H1 (cell line): ENCODE measurements at regions of chr11 and their contacts with region 1.

Region 1: DNA sequence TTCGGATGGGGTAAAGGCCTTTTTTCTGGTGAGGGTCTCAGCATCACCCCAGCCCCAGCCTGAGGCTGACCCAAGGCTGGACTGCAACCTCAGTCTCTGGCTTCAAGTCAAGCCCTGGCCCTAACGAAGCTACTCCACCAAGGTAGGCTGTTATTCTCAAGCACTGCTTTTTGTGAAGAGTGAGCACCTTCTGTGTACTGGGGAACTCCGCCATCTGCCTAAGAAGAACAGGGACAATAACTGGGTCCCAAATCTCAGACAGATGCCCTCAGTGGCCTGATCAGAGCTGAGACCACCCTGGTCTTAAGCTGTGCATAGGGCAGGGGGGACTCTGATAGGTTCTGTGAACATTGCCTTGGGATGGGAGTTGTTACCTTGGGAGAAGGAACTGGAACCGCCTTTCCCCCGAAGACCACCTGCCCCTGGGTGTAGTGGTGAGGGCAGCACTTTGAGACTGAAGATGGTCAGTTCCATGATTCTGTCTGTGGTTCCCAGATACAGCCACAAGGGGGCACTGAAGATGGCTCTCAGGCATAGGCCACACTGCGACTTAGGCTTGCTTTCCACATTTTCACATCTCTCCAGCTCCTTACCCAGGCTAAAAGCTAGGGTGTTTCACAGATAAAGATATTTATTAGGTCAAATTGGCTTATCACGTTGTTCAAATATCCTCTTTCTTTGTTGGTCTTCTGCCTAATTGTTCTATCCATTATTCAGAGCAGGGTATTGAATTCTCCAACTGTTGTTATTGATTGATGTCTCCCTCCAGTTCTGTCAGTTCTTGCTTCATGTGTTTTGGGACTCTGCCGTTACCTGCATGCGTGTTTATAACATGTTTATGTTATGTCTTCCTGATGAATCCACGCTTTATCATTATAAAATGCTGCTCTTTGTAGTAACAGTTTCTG is 11.8 kb upstream of the UVRAG start:
- DNase-seq: peak; percentile 53 to 91
- H3K4me3 ChIP-seq: no peak overlapping the region
- H3K27ac ChIP-seq: no peak overlapping the region
- H3K4me1 ChIP-seq: 0 out of 7 replicates have a peak, but pooled peaks cover 0 to 2% (median 0%) of the 10 kb centered on the region in 4 experiments
- H3K27me3 ChIP-seq: no peaks in the 10 kb centered on the region
- CTCF ChIP-seq: peak; percentile 79 to 98 (median 91)
- EP300 ChIP-seq: no peak
- POLR2A ChIP-seq: no peak
- RAD21 ChIP-seq: peak; percentile 87 to 91

Region 2: GRCh38 chr11:75762885-75763284 is 40.3 kb before region 1 on chr11:
- CTCF ChIA-PET with region 1: interaction called, 12 read pairs
- POLR2A ChIA-PET with region 1: no interaction called
- DNase-seq: no peak
- H3K4me3 ChIP-seq: no peak overlapping the region
- H3K27ac ChIP-seq: no peak overlapping the region
- H3K4me1 ChIP-seq: peaks cover 0 to 8% (median 2%) of the 10 kb centered on the region in 4 experiments; a peak in 3 of 7 replicates
- H3K27me3 ChIP-seq: peaks cover under 1 to 20% (median 13%) of the 10 kb centered on the region in 4 experiments
- CTCF ChIP-seq: no peak
- EP300 ChIP-seq: no peak
- POLR2A ChIP-seq: no peak
- RAD21 ChIP-seq: no peak

Region 3: DNA sequence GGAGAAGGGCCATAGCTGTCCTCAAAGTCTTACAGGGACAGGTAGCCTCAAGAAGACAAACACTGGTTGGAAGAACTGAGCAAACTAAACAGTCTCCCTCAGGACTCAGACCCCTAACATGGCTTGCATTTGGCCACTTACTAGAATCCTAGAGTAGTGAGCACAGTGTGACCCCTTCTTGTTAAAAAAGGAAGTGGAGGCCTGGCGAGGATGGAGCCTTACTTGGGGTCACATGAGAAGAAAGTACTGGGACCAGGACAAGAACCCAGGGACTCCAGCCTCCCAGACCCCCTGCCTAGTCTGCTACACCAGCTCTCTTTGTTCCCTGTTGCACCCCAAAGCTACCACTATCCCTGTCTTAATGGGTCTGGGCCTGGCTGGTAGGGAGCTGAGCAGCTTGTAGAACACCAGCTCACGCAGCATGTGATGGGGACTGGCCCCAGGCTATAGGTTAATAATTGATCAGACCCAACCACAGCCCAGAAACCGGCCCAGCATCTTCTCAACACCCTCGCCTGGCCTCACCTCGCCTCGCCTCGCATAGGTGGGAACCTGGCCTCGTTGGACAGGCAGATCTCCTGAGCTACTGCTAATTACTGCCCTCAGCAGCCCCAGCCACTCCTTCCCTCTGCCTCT is 16.9 kb before region 1 on chr11:
- CTCF ChIA-PET with region 1: interaction called, 39 read pairs
- POLR2A ChIA-PET with region 1: no interaction called
- DNase-seq: no peak
- H3K4me3 ChIP-seq: no peak overlapping the region
- H3K27ac ChIP-seq: no peak overlapping the region
- H3K4me1 ChIP-seq: no peaks in the 10 kb centered on the region
- H3K27me3 ChIP-seq: no peaks in the 10 kb centered on the region
- CTCF ChIP-seq: no peak
- EP300 ChIP-seq: no peak
- POLR2A ChIP-seq: no peak
- RAD21 ChIP-seq: no peak

Region 4: DNA sequence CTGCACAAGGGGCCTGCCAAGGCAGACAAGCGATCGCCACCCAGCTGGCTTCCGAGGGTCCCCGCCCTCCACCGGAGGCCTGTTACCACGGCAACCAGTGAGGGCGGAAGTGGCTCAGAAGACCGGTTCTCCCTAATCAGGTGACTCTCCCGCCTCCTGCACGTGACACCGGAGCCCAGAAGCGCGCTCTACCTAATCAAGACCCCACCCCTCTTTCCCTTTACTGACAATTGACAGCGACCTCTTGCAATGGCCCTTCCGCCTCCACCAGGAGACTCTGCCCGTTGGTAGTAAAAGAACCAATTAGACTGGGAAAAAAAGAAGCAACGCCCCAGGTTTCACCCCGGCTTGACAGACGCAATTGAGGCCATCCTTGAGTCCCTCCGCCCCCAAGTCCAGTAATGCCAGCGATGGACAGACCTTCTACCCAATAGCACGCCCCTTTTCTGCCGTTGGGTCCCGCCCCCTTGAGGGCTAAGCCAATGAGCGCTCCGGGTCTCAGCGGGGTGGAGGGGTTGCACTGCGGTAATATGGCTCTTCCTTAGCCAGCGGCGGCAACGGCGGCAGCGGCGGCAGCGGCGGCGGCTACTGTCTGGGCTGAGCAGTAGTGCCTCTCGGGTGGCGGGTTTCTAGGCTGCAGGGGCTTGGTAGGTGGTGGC is 11.6 kb after region 1 on chr11 and contains the start of gene UVRAG:
- CTCF ChIA-PET with region 1: interaction called, 40 read pairs
- POLR2A ChIA-PET with region 1: no interaction called
- DNase-seq: peak; percentile 95 to 99
- H3K4me3 ChIP-seq: peak within 1 kb of the TSS; percentile 82 to 96 (median 85)
- H3K27ac ChIP-seq: no peak within 1 kb of the TSS
- H3K4me1 ChIP-seq: peaks cover 2 to 17% (median 9%) of the 10 kb centered on the region in 4 experiments; a peak in 6 of 7 replicates
- H3K27me3 ChIP-seq: no peaks in the 10 kb centered on the region
- CTCF ChIP-seq: no peak
- EP300 ChIP-seq: no peak; a peak in 1 of 3 replicates
- POLR2A ChIP-seq: peak in 1 of 2 experiments; percentile 27; a peak in 1 of 3 replicates
- RAD21 ChIP-seq: no peak
- total RNA-seq, gene UVRAG: 10.4 and 14.7 TPM in 2 replicates

Region 5: GRCh38 chr11:75839851-75840250 is 36.7 kb after region 1 on chr11:
- CTCF ChIA-PET with region 1: no interaction called
- POLR2A ChIA-PET with region 1: no interaction called
- DNase-seq: no peak
- H3K4me3 ChIP-seq: no peak overlapping the region
- H3K27ac ChIP-seq: no peak overlapping the region
- H3K4me1 ChIP-seq: no peaks in the 10 kb centered on the region
- H3K27me3 ChIP-seq: no peaks in the 10 kb centered on the region
- CTCF ChIP-seq: no peak
- EP300 ChIP-seq: no peak
- POLR2A ChIP-seq: no peak
- RAD21 ChIP-seq: no peak

Region 6: GRCh38 chr11:75862437-75862836 is 59.3 kb after region 1 on chr11:
- CTCF ChIA-PET with region 1: interaction called, 94 read pairs
- POLR2A ChIA-PET with region 1: interaction called, 4 read pairs
- DNase-seq: no peak
- H3K4me3 ChIP-seq: no peak overlapping the region
- H3K27ac ChIP-seq: no peak overlapping the region
- H3K4me1 ChIP-seq: no peaks in the 10 kb centered on the region
- H3K27me3 ChIP-seq: peaks cover 0 to 1% (median 0%) of the 10 kb centered on the region in 4 experiments; a peak in 1 of 7 replicates
- CTCF ChIP-seq: no peak
- EP300 ChIP-seq: no peak
- POLR2A ChIP-seq: no peak
- RAD21 ChIP-seq: no peak

Region 7: DNA sequence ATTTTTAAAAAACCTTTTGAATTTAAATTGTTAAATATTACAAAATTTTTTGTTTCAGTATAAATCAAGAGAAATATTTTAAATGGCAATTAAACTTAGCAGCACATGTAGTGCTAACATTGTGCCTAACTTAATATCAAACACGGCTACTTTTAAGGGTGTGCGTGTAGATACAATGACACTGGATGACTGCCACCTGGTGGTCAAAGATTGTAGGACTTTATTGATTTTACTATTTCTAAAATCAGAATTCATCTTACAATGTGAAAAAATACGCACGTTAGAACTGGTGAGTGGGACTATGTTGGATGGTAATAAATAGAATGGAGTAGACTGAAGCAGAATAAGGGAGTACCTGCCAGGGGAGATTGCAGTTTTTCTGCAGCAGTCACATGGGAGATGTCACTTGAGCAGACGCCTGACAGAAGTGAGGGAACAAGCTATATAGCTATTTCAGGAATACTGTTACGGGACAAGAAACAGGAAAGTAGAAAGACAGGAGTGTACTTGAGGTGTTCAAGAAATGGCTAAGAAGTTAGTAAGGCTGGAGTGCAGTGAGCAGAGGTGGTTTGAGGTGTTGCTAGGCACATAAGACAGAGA is 64.7 kb after region 1 on chr11:
- CTCF ChIA-PET with region 1: interaction called, 94 read pairs
- POLR2A ChIA-PET with region 1: interaction called, 4 read pairs
- DNase-seq: no peak
- H3K4me3 ChIP-seq: no peak overlapping the region
- H3K27ac ChIP-seq: no peak overlapping the region
- H3K4me1 ChIP-seq: no peaks in the 10 kb centered on the region; a peak in 1 of 7 replicates
- H3K27me3 ChIP-seq: no peaks in the 10 kb centered on the region
- CTCF ChIP-seq: peak in 2 of 3 experiments; percentile 50 to 64; a peak in 2 of 4 replicates
- EP300 ChIP-seq: no peak
- POLR2A ChIP-seq: no peak
- RAD21 ChIP-seq: peak; percentile 68 to 69

Region 8: DNA sequence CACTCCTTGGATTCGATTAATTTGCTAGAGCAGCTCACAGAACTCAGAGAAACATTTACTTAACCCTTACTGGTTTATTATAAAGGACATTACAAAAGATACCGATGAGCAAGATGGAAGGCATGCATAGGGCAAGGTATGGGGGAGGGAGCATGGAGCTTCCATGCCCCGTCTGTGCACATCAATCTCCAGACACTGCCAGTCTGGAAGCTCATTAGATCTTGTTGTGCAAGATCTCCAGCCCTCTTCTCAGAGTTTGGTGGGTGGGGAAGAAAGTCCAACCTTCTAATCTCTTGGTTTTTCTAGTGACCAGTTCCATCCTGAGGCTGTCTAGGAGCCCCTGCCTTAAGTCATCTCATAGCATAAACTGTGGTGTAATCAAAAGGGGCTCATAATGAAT is 202.6 kb after region 1 on chr11:
- CTCF ChIA-PET with region 1: no interaction called
- POLR2A ChIA-PET with region 1: no interaction called
- DNase-seq: no peak
- H3K4me3 ChIP-seq: no peak overlapping the region
- H3K27ac ChIP-seq: no peak overlapping the region; the same call in 1 of the 2 replicates
- H3K4me1 ChIP-seq: no peaks in the 10 kb centered on the region
- H3K27me3 ChIP-seq: no peaks in the 10 kb centered on the region
- CTCF ChIP-seq: no peak
- EP300 ChIP-seq: no peak
- POLR2A ChIP-seq: no peak
- RAD21 ChIP-seq: no peak

Region 9: GRCh38 chr11:76030286-76030685 is 227.1 kb after region 1 on chr11:
- CTCF ChIA-PET with region 1: no interaction called
- POLR2A ChIA-PET with region 1: no interaction called
- DNase-seq: no peak
- H3K4me3 ChIP-seq: no peak overlapping the region
- H3K27ac ChIP-seq: no peak overlapping the region
- H3K4me1 ChIP-seq: peaks cover 0 to 4% (median 0%) of the 10 kb centered on the region in 4 experiments; a peak in 3 of 7 replicates
- H3K27me3 ChIP-seq: no peaks in the 10 kb centered on the region
- CTCF ChIP-seq: no peak
- EP300 ChIP-seq: no peak
- POLR2A ChIP-seq: no peak
- RAD21 ChIP-seq: no peak